A673 (cell line): ENCODE measurements at regions of chr10 and their contacts with region 1.

Region 1: GRCh38 chr10:125629763-125630376 is 53.1 kb downstream of the TEX36 start:
- DNase-seq: peak; percentile 77
- H3K4me3 ChIP-seq: no peak overlapping the region
- H3K27ac ChIP-seq: no peak overlapping the region
- H3K4me1 ChIP-seq: peaks cover 63% of the 10 kb centered on the region
- H3K27me3 ChIP-seq: no peaks in the 10 kb centered on the region
- CTCF ChIP-seq: peak; percentile 72

Region 2: DNA sequence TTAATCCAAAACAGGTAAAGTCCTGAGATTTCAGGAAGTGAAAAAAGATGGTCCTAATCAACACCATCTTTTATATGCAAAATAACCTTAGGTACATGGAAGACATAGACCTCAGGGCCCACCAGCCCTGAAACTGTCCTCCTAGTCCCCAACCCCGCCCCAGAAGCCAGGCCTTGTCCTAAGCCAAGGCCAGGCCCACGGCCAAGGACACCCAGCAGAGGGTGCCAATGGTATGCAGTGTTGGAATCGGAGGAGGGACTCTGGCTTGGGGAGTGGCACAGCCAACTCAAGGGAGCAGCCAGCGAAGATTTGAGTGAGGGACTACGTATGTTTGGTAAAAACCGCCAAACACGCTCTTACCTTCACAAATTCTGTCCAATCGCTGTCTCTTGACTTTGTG is 591.2 kb before region 1 on chr10:
- CTCF ChIA-PET with region 1: no interaction called
- POLR2A ChIA-PET with region 1: no interaction called
- intact Hi-C with region 1: loop called (anchors 5 kb)
- DNase-seq: peak; percentile 43
- H3K4me3 ChIP-seq: no peak overlapping the region
- H3K27ac ChIP-seq: peak overlapping the region; percentile 83
- H3K4me1 ChIP-seq: peaks cover 90% of the 10 kb centered on the region
- H3K27me3 ChIP-seq: no peaks in the 10 kb centered on the region
- CTCF ChIP-seq: peak; percentile 45

Region 3: GRCh38 chr10:125160856-125161706 is 468.8 kb before region 1 on chr10:
- CTCF ChIA-PET with region 1: no interaction called
- POLR2A ChIA-PET with region 1: no interaction called
- intact Hi-C with region 1: loop called (anchors 2 kb)
- DNase-seq: peak; percentile 96
- H3K4me3 ChIP-seq: peak overlapping the region; percentile 91
- H3K27ac ChIP-seq: peak overlapping the region; percentile 87
- H3K4me1 ChIP-seq: peaks cover 31% of the 10 kb centered on the region
- H3K27me3 ChIP-seq: no peaks in the 10 kb centered on the region
- CTCF ChIP-seq: peak; percentile 40; the same call in 1 of the 2 replicates

Region 4: DNA sequence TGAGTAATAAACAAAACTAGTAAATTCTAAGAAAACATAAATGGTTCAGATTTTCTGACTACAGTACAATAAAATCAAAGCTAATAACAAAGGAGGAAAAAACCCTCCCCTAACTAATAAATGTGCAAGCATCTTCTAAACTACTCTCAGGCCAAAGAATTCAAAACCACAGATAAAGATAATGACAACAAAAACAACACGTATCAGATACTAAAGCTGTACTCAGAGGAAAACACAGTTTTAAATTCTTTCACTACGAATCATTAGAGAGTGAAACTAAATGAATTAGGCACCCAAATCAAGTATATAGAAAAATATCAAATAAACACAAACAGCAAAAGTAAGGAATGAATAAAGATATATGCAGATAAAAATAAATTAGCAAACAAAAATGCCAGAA is 147.8 kb before region 1 on chr10:
- CTCF ChIA-PET with region 1: no interaction called
- POLR2A ChIA-PET with region 1: no interaction called
- intact Hi-C with region 1: no loop called
- DNase-seq: no peak
- H3K4me3 ChIP-seq: no peak overlapping the region
- H3K27ac ChIP-seq: no peak overlapping the region
- H3K4me1 ChIP-seq: no peaks in the 10 kb centered on the region
- H3K27me3 ChIP-seq: peaks cover 59% of the 10 kb centered on the region
- CTCF ChIP-seq: no peak

Region 5: DNA sequence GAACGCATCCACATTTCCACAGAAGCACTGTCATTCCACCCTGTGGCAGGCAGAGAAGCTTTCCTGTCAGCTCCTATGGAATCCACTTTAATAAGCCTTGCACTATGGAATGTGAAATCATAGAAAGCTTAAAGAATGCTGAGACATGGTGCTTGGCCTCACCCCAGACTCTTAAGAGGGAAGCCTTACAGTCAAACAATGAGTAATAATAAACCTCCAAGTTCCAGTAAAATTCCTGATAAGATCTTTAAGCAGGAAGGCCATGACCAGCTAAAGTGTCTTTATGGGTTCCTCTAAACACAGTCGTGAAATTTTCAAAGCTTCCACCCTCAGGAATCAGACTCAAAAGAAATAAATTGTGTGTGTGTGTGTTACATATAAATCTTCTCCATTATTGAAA is 65.0 kb after region 1 on chr10:
- CTCF ChIA-PET with region 1: no interaction called
- POLR2A ChIA-PET with region 1: no interaction called
- intact Hi-C with region 1: loop called (anchors 5 kb)
- DNase-seq: peak; percentile 33
- H3K4me3 ChIP-seq: no peak overlapping the region
- H3K27ac ChIP-seq: no peak overlapping the region
- H3K4me1 ChIP-seq: peaks cover 34% of the 10 kb centered on the region
- H3K27me3 ChIP-seq: no peaks in the 10 kb centered on the region
- CTCF ChIP-seq: no peak